Lower lobe of right lung (tissue), 2 donors: ENCODE measurements at regions of chr15 and their contacts with region 1.

Region 1: DNA sequence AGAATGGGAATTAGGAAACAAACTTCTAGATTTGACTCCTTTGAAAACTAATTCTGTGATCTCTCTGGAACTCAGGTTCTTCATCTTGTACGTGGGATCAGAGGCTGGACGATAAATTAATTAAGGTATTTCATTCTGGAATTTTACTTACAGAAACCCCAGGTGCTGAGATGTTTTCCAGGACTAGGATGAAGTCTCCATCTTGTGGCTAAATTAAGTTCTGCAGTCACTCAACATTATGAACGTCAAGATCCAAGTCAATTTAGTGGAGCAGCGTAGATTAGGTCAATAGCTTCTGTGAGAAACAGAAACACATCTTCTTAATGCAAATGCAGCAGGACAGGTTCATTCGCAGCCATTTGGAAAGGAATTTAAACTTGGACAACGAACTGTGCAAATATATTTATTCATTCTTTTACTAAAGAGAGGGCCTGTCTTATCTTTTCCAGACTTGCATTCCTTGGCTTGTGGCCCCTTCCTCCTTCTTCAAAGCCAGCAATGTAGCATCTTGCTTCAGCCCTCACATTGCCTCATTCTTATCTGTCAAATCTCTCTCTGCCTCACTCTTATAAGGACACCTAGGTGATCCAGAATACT is 26.7 kb upstream of the TMC3 start:
- DNase-seq: no peak
- ATAC-seq: no peak
- H3K4me3 ChIP-seq: no peak overlapping the region
- H3K27ac ChIP-seq: no peak overlapping the region
- H3K4me1 ChIP-seq: no peaks in the 10 kb centered on the region
- H3K27me3 ChIP-seq: no peaks in the 10 kb centered on the region
- CTCF ChIP-seq: peak; percentile 80

Region 2: DNA sequence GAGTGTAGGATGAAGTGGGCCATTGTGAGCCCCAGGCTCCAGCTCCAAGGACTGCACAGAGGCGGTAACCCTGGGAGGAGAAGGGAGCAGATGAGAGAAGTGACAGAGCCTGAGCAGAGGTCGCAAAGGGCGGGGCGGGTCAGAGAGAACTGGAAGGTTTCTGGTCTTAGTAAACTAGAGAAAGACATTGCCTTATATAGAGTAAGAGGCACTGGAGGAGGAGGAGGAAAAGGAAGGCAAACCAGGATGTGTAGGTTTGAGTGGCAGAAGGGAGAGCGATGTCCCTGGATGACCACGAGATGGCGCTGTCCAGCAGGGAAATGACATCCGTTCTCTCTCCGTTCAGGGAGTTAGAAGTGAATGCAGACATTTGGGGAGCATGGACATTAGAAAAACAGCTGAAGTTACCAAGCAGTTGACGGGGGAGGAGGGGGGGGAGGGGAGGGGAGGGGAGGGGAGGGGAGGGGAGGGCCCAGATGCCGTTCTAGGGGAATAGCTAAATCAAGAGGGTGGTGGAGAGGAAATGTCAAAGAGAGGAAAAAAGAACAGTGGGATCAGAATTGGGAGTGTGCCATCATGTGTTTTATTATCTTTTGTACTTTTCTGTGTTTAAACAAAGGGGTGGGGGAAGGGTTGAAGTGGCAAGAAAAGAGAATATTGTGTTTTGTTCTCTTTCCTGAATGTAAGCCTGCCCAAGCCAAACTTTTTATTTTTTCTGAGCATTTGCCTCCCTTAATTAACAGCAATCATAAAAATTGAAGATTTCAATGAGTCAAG is 125.6 kb before region 1 on chr15:
- intact Hi-C with region 1: loop called (anchors 5 kb)
- DNase-seq: peak; percentile 77
- ATAC-seq: peak; percentile 90 to 92
- H3K4me3 ChIP-seq: no peak overlapping the region
- H3K27ac ChIP-seq: no peak overlapping the region
- H3K4me1 ChIP-seq: peaks cover 28% of the 10 kb centered on the region
- H3K27me3 ChIP-seq: no peaks in the 10 kb centered on the region
- CTCF ChIP-seq: peak; percentile 81